ENCODE measurements at regions of chr10 and their contacts with region 1.

Region 1: GRCh38 chr10:27241652-27242472 is 1.3 kb upstream of the ACBD5 start:
- DNase-seq: peak; percentile 96
- ATAC-seq: peak; percentile 65
- H3K4me3 ChIP-seq: peak overlapping the region; percentile 78 to 97 (median 91)
- H3K4me3 Mint-ChIP-seq: peak overlapping the region; percentile 95
- H3K27ac ChIP-seq: peak overlapping the region; percentile 93 to 97
- H3K27ac Mint-ChIP-seq: peak overlapping the region; percentile 100
- H3K4me1 ChIP-seq: peaks cover 17 to 27% of the 10 kb centered on the region in 2 donors
- H3K4me1 Mint-ChIP-seq: peaks cover 42% of the 10 kb centered on the region
- H3K27me3 ChIP-seq: no peaks in the 10 kb centered on the region
- H3K27me3 Mint-ChIP-seq: no peaks in the 10 kb centered on the region
- CTCF ChIP-seq: no peak

Region 2: DNA sequence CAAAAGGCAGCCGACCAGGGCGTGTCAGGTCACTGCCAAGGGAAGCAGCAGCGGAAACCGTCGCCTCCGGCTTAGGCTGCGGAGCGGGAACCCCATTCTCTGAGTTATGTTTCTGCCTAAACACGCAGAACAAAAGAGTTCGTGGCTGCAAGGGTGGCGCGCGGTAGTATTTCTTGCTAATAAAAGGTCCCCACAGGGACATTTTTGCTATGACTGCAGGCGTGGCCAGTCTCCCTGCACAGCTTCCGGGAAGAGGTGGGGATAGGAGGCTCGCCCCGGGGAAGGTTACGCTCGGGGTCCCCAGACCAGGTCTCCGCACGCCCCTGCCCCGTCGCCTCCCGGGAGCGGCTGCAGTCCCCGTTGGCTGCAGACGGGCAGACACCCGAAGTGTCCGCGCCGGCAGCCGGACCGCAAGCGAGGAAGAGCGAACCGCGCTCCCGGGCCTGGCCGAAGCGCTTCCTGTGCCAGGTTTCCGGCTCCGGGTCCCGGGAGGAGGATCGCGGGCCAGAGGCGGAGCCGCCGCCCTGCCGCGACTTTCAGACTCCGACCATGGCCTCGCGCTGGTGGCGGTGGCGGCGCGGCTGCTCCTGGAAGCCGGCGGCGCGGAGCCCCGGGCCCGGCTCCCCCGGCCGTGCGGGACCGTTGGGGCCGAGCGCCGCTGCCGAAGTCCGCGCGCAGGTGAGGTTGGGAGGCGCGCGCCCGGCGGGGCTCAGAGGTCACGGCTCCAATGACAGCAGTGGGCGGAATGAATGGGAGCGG is 544.5 kb before region 1 on chr10 and contains the start of gene PDSS1:
- CTCF ChIA-PET with region 1: no interaction called
- POLR2A ChIA-PET with region 1: no interaction called
- intact Hi-C with region 1: loop called (anchors 5 kb)
- DNase-seq: peak; percentile 75
- ATAC-seq: peak; percentile 87
- H3K4me3 ChIP-seq: peak within 1 kb of the TSS; percentile 49 to 95 (median 94)
- H3K4me3 Mint-ChIP-seq: peak within 1 kb of the TSS; percentile 93
- H3K27ac ChIP-seq: peak within 1 kb of the TSS; percentile 64 to 73
- H3K27ac Mint-ChIP-seq: peak within 1 kb of the TSS; percentile 90
- H3K4me1 ChIP-seq: peaks cover 10 to 13% of the 10 kb centered on the region in 2 donors
- H3K4me1 Mint-ChIP-seq: peaks cover 18% of the 10 kb centered on the region
- H3K27me3 ChIP-seq: no peaks in the 10 kb centered on the region
- H3K27me3 Mint-ChIP-seq: no peaks in the 10 kb centered on the region
- CTCF ChIP-seq: no peak
- total RNA-seq, gene PDSS1: 3.6 and 4.3 TPM in 2 replicates

Region 3: DNA sequence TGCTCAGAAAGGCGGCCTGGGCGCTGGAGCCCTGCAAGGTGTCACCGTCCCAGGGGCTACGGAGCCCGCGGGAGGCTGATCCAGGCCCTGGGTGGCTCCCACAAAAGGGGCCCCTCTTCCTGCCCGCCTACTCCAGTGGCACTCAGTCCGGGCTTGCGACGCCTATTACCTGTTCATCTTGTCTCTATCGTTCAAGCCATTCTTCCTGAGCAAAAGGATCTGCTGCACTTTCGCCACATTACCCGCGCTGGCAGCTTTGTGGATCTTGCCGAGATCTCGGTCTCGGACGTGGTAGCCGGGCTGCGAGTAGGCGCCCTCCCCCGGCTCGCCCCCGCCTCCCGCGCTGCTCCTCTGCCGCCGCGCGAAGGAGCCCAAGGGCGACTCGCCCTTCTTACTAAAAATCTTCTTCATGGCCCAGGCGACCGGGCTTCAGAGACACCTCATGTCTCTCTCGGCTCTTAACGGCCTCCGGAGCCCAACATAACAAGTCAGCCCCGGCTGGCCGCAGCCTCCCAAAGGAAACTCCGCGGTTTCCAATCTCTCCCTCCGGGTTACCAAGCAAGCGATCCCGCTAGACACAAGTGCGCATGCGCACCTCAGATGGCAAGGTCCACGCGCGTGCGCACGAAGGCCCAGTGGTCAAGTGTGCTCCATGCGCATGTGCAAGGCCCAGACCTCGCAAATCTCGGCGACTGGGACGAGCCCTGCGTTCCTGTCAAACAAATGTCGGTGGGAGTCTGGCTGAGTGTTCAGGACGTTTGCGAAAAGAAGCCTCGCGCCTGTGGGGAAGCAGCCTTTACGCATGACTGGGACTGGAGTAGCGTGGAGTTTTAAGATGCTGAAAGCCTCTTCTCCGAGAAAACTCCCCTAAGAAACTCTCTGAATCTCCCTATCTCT is 141.7 kb before region 1 on chr10 and contains the start of gene ANKRD26:
- CTCF ChIA-PET with region 1: no interaction called
- POLR2A ChIA-PET with region 1: no interaction called
- intact Hi-C with region 1: loop called (anchors 5 kb)
- DNase-seq: peak; percentile 97
- ATAC-seq: peak; percentile 87
- H3K4me3 ChIP-seq: peak within 1 kb of the TSS; percentile 73 to 92 (median 84)
- H3K4me3 Mint-ChIP-seq: peak within 1 kb of the TSS; percentile 86
- H3K27ac ChIP-seq: peak within 1 kb of the TSS; percentile 81
- H3K27ac Mint-ChIP-seq: peak within 1 kb of the TSS; percentile 97
- H3K4me1 ChIP-seq: peaks cover 13 to 18% of the 10 kb centered on the region in 2 donors
- H3K4me1 Mint-ChIP-seq: peaks cover 25% of the 10 kb centered on the region
- H3K27me3 ChIP-seq: no peaks in the 10 kb centered on the region
- H3K27me3 Mint-ChIP-seq: no peaks in the 10 kb centered on the region
- CTCF ChIP-seq: no peak
- total RNA-seq, gene ANKRD26: 10.5 and 13.5 TPM in 2 replicates

Region 4: GRCh38 chr10:27223964-27224363 is 17.9 kb before region 1 on chr10:
- CTCF ChIA-PET with region 1: interaction called, 14 read pairs
- POLR2A ChIA-PET with region 1: no interaction called
- intact Hi-C with region 1: loop called (anchors 2 kb)
- DNase-seq: peak; percentile 67
- ATAC-seq: no peak
- H3K4me3 ChIP-seq: no peak overlapping the region
- H3K4me3 Mint-ChIP-seq: no peak overlapping the region
- H3K27ac ChIP-seq: no peak overlapping the region
- H3K27ac Mint-ChIP-seq: no peak overlapping the region
- H3K4me1 ChIP-seq: no peaks in the 10 kb centered on the region
- H3K4me1 Mint-ChIP-seq: no peaks in the 10 kb centered on the region
- H3K27me3 ChIP-seq: no peaks in the 10 kb centered on the region
- H3K27me3 Mint-ChIP-seq: no peaks in the 10 kb centered on the region
- CTCF ChIP-seq: peak; percentile 88

Region 5: DNA sequence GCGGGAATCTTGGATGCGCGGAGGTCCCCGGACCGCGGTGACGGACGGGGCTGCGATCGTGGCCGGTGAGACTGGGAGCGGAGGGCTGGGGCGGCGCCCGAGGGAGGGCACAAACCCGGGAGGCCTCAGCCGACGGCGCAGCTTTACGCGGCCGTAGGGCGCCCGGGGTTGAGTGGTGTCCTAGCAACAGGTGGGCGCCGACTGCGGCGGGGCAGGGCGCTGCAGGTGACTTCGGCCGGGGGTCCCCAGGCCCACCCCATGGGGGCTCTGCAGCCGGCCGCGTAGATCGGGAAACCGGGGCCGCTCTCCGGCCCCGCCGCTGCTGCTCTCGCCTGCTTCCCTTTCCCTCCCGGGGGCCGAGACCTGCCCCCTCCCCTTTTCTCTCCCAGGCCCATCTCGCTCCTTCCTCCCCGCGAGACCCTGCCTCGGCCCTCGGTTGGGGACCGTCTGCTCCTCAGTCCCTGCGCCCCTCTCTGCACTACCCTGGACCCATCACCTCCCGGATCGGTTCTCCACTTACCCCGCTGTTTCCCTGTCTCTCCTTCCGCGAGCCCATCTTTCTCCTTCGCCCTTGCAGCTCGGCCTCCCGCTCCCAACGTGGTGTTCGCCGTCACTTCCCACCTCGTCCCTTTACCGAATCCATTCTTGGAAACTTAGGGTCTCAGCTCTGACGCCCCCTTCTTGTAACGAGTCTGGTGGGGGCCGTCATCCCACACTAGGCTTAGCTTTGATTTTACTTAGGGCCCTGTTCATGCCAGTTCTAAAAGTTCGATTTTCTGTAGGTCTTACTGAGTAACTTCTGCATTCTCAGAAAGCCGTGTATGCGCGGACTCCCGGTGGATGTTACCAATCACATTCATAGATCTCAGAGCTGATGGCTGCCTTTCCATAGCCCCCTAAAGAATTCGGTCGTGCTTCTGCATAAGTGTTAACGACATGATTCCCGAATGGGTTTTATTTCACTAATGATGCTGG is 17.3 kb after region 1 on chr10:
- CTCF ChIA-PET with region 1: interaction called, 4 read pairs
- POLR2A ChIA-PET with region 1: interaction called, 5 read pairs
- intact Hi-C with region 1: loop called (anchors 2 kb)
- DNase-seq: peak; percentile 59
- ATAC-seq: peak; percentile 64
- H3K4me3 ChIP-seq: peak overlapping the region in 4 of 5 experiments; percentile 36 to 74 (median 56)
- H3K4me3 Mint-ChIP-seq: peak overlapping the region; percentile 97
- H3K27ac ChIP-seq: no peak overlapping the region
- H3K27ac Mint-ChIP-seq: no peak overlapping the region
- H3K4me1 ChIP-seq: peaks cover 21 to 24% of the 10 kb centered on the region in 2 donors
- H3K4me1 Mint-ChIP-seq: peaks cover 23% of the 10 kb centered on the region
- H3K27me3 ChIP-seq: peaks cover 0 to 31% (median 27%) of the 10 kb centered on the region in 4 experiments
- H3K27me3 Mint-ChIP-seq: peaks cover 50% of the 10 kb centered on the region
- CTCF ChIP-seq: no peak

Region 6: DNA sequence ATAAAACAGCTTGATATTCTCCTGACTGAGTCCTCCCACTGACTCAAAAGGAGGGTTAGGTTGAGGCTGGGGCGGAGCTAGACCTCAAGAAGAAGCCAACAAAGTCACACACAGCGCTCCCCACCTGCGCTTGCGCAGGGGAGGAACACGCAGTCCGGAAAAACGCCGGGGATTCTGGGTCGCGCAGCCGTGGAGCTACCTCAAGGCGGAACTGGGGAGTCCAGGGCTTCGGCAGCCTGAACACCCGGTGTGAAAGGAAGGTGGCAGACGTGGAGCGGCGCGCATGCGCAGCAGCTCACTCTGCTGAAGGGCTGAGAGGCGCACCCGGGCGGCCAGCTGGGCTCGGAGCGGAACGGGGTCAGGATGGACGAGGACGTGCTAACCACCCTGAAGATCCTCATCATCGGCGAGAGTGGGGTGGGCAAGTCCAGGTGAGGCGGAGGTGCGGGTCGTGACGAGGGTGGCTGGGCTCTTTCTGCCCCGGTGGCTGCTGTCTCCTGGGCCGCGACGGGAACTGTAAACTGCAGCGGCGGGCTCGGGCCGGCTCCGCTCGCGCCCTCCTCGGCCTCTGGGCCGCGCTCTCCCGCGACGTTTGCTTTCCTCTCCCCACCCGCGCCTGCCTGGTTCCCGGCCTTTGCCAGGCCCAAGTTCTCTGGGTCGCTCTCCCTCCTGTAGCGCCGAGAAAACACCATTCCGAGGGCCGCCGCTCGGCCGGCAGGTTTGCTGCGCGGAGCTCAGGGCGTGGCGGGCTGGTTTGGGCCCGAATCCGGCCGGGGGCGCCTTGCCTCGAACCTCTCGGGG is 262.3 kb after region 1 on chr10 and contains the start of gene RAB18:
- CTCF ChIA-PET with region 1: interaction called, 3 read pairs
- POLR2A ChIA-PET with region 1: interaction called, 8 read pairs
- intact Hi-C with region 1: loop called (anchors 1 kb)
- DNase-seq: peak; percentile 98
- ATAC-seq: peak; percentile 95
- H3K4me3 ChIP-seq: peak within 1 kb of the TSS; percentile 68 to 91 (median 86)
- H3K4me3 Mint-ChIP-seq: peak within 1 kb of the TSS; percentile 100
- H3K27ac ChIP-seq: peak within 1 kb of the TSS; percentile 87 to 88
- H3K27ac Mint-ChIP-seq: peak within 1 kb of the TSS; percentile 100
- H3K4me1 ChIP-seq: peaks cover 13 to 18% of the 10 kb centered on the region in 2 donors
- H3K4me1 Mint-ChIP-seq: peaks cover 41% of the 10 kb centered on the region
- H3K27me3 ChIP-seq: peaks cover 0 to 15% (median 2%) of the 10 kb centered on the region in 4 experiments
- H3K27me3 Mint-ChIP-seq: peaks cover 4% of the 10 kb centered on the region
- CTCF ChIP-seq: no peak
- total RNA-seq, gene RAB18: 56.5 and 60.5 TPM in 2 replicates

Region 7: GRCh38 chr10:27981744-27982143 is 739.9 kb after region 1 on chr10:
- CTCF ChIA-PET with region 1: no interaction called
- POLR2A ChIA-PET with region 1: no interaction called
- intact Hi-C with region 1: no loop called
- DNase-seq: no peak
- ATAC-seq: no peak
- H3K4me3 ChIP-seq: no peak overlapping the region
- H3K4me3 Mint-ChIP-seq: no peak overlapping the region
- H3K27ac ChIP-seq: no peak overlapping the region
- H3K27ac Mint-ChIP-seq: no peak overlapping the region
- H3K4me1 ChIP-seq: no peaks in the 10 kb centered on the region
- H3K4me1 Mint-ChIP-seq: no peaks in the 10 kb centered on the region
- H3K27me3 ChIP-seq: no peaks in the 10 kb centered on the region
- H3K27me3 Mint-ChIP-seq: peaks cover 4% of the 10 kb centered on the region
- CTCF ChIP-seq: no peak